Breast epithelium (tissue), 4 donors: ENCODE measurements at regions of chr7 and their contacts with region 1.

Region 1: DNA sequence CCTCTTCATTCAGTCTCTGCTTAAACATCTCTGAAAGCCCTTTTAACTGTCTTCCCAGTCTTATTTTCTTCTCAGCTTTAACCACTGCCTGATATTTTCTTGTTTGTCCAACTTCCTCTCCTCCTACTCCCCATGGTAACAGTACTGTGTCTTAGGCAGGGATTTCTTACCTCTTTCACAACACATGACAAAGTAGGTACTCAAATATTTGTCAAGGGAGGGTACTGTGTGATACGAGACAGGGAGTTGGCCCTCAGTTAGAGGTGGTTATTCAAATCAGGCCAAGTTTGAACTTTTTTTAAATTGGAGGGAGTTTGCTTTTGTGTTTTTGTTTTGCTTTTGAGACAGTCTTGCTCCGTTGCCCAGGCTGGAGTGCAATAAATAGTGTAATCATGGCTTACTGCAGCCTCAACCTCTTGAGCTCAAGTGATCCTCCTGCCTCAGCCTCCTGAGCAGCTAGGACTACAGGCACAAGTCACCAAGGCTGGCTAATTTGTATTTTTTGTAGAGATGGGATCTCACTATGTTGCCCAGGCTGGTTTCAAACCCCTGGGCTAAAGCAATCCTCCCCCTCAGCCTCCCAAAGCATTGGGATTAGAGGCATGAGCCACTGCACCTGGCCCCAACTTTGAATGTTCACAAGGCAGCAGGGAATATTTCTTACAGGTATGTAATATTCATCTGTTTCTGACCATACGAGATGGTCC is 2.5 kb upstream of the KPNA7 start:
- DNase-seq: no peak
- H3K4me3 ChIP-seq: no peak overlapping the region
- H3K27ac ChIP-seq: peak overlapping the region; percentile 56 to 84
- H3K4me1 ChIP-seq: no peaks in the 10 kb centered on the region
- H3K27me3 ChIP-seq: no peaks in the 10 kb centered on the region
- CTCF ChIP-seq: no peak
- POLR2A ChIP-seq: no peak

Region 2: DNA sequence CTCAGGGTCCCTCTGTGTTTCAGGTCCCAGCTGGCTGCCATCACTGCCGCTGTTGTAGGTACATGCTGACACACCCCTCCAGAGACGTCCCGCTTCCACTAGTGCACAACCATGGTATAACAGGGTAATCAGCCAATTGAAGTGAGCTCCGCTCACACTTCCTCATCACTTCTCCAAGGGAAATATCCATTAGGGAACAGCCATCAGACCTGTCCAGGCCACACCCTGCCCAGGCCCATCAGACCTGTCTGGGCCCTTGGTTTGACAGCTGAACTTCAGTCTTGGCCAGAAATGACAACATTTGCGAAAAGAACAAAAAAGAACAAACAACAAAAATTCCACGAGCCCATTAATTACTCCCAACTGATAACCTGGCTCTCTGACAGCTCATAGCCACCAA is 51.2 kb after region 1 on chr7:
- intact Hi-C with region 1: loop called (anchors 2 kb)
- DNase-seq: no peak
- H3K4me3 ChIP-seq: no peak overlapping the region
- H3K27ac ChIP-seq: no peak overlapping the region
- H3K4me1 ChIP-seq: no peaks in the 10 kb centered on the region
- H3K27me3 ChIP-seq: no peaks in the 10 kb centered on the region
- CTCF ChIP-seq: no peak
- POLR2A ChIP-seq: no peak